ENCODE measurements at regions of chr4 and their contacts with region 1.

Region 1: GRCh38 chr4:18689308-18690115 is 668.0 kb upstream of the LCORL start:
- DNase-seq: peak; percentile 46 to 67
- H3K4me3 ChIP-seq: no peak overlapping the region
- H3K4me3 Mint-ChIP-seq: peak overlapping the region; percentile 3
- H3K27ac Mint-ChIP-seq: no peak overlapping the region
- H3K4me1 ChIP-seq: peaks cover 42% of the 10 kb centered on the region
- H3K4me1 Mint-ChIP-seq: peaks cover 42% of the 10 kb centered on the region
- H3K27me3 ChIP-seq: no peaks in the 10 kb centered on the region
- H3K27me3 Mint-ChIP-seq: no peaks in the 10 kb centered on the region
- CTCF ChIP-seq: peak; percentile 72 to 80

Region 2: GRCh38 chr4:18566970-18567799 is 122.3 kb before region 1 on chr4:
- CTCF ChIA-PET with region 1: no interaction called
- POLR2A ChIA-PET with region 1: no interaction called
- intact Hi-C with region 1: no loop called
- DNase-seq: peak; percentile 23 to 36
- H3K4me3 ChIP-seq: no peak overlapping the region
- H3K4me3 Mint-ChIP-seq: no peak overlapping the region
- H3K27ac Mint-ChIP-seq: no peak overlapping the region
- H3K4me1 ChIP-seq: peaks cover 20% of the 10 kb centered on the region
- H3K4me1 Mint-ChIP-seq: peaks cover 15% of the 10 kb centered on the region
- H3K27me3 ChIP-seq: no peaks in the 10 kb centered on the region
- H3K27me3 Mint-ChIP-seq: peaks cover 3% of the 10 kb centered on the region
- CTCF ChIP-seq: no peak

Region 3: GRCh38 chr4:18934197-18934596 is 244.7 kb after region 1 on chr4:
- CTCF ChIA-PET with region 1: no interaction called
- POLR2A ChIA-PET with region 1: no interaction called
- intact Hi-C with region 1: loop called (anchors 1 kb)
- DNase-seq: no peak
- H3K4me3 ChIP-seq: no peak overlapping the region
- H3K4me3 Mint-ChIP-seq: no peak overlapping the region
- H3K27ac Mint-ChIP-seq: no peak overlapping the region
- H3K4me1 ChIP-seq: no peaks in the 10 kb centered on the region
- H3K4me1 Mint-ChIP-seq: no peaks in the 10 kb centered on the region
- H3K27me3 ChIP-seq: no peaks in the 10 kb centered on the region
- H3K27me3 Mint-ChIP-seq: no peaks in the 10 kb centered on the region
- CTCF ChIP-seq: no peak

Region 4: DNA sequence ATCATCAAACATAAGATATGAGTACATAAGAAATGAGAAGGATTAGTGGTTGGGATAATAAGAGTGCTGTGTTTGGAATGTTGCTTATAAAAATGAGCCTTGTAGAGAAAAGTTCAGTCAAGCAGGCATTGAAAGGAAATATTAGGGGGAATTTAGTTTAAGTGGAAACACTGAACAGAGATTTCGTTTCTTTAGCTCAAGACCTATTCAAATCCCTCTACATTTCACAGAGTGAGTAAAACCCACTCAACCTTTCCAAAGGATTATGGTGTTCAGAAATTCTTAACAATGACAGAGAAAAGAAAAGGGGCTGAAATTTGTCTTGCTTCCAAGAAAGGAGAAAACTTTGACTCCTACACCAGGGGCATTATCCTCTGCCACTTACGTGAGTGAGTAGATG is 404.4 kb after region 1 on chr4:
- CTCF ChIA-PET with region 1: no interaction called
- POLR2A ChIA-PET with region 1: no interaction called
- intact Hi-C with region 1: loop called (anchors 5 kb)
- DNase-seq: no peak
- H3K4me3 ChIP-seq: no peak overlapping the region
- H3K4me3 Mint-ChIP-seq: no peak overlapping the region
- H3K27ac Mint-ChIP-seq: no peak overlapping the region
- H3K4me1 ChIP-seq: no peaks in the 10 kb centered on the region
- H3K4me1 Mint-ChIP-seq: no peaks in the 10 kb centered on the region
- H3K27me3 ChIP-seq: no peaks in the 10 kb centered on the region
- H3K27me3 Mint-ChIP-seq: no peaks in the 10 kb centered on the region
- CTCF ChIP-seq: no peak

Region 5: DNA sequence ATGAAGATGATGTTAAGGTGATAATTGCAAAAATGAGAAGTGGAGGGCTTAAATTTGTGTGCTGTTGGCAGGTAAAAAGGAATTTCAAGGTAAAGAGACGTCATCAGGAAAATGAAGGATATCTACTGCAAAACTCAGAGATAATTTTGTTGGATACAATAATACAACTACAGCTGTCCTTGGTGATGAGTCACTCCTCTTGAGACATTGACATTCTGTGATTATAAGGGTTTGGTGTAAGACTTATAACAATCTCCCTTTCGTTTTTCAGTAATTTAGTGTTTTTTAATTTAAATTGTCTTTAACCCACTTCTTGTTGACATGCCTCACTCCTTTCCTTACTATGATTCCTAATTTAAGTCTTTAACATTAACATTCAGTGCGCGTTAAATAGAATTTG is 488.1 kb after region 1 on chr4:
- CTCF ChIA-PET with region 1: no interaction called
- POLR2A ChIA-PET with region 1: no interaction called
- intact Hi-C with region 1: loop called (anchors 5 kb)
- DNase-seq: no peak
- H3K4me3 ChIP-seq: no peak overlapping the region
- H3K4me3 Mint-ChIP-seq: no peak overlapping the region
- H3K27ac Mint-ChIP-seq: no peak overlapping the region
- H3K4me1 ChIP-seq: no peaks in the 10 kb centered on the region; the same call in 1 of the 2 replicates
- H3K4me1 Mint-ChIP-seq: no peaks in the 10 kb centered on the region
- H3K27me3 ChIP-seq: no peaks in the 10 kb centered on the region
- H3K27me3 Mint-ChIP-seq: no peaks in the 10 kb centered on the region
- CTCF ChIP-seq: no peak

Region 6: GRCh38 chr4:20251796-20252655 is 1562.5 kb after region 1 on chr4 and contains the start of gene SLIT2:
- CTCF ChIA-PET with region 1: no interaction called
- POLR2A ChIA-PET with region 1: no interaction called
- intact Hi-C with region 1: loop called (anchors 2 kb)
- DNase-seq: peak; percentile 78 to 84
- H3K4me3 ChIP-seq: peak within 1 kb of the TSS; percentile 46
- H3K4me3 Mint-ChIP-seq: peak within 1 kb of the TSS; percentile 72
- H3K27ac Mint-ChIP-seq: no peak within 1 kb of the TSS
- H3K4me1 ChIP-seq: no peaks in the 10 kb centered on the region
- H3K4me1 Mint-ChIP-seq: no peaks in the 10 kb centered on the region
- H3K27me3 ChIP-seq: no peaks in the 10 kb centered on the region; the same call in 1 of the 2 replicates
- H3K27me3 Mint-ChIP-seq: peaks cover 13% of the 10 kb centered on the region
- CTCF ChIP-seq: peak in 1 of 2 experiments; percentile 36
- total RNA-seq, gene SLIT2: 0.68 and 0.72 TPM in 2 replicates

Measured in Caco-2 (cell line).